T-cell (primary cell): ENCODE measurements at regions of chr5 and their contacts with region 1.

Region 1: GRCh38 chr5:175479125-175479881 is 943 bp downstream of the SFXN1 start:
- DNase-seq: peak in 2 of 35 experiments; percentile 0 to 16
- ATAC-seq: peak in 3 of 4 experiments; percentile 4 to 27 (median 16)
- H3K4me3 ChIP-seq: peak overlapping the region; percentile 65 to 85
- H3K4me3 Mint-ChIP-seq: peak overlapping the region; percentile 93 to 96 (median 96)
- H3K27ac ChIP-seq: peak overlapping the region; percentile 42
- H3K27ac Mint-ChIP-seq: peak overlapping the region; percentile 93 to 94
- H3K4me1 ChIP-seq: peaks cover 10 to 44% of the 10 kb centered on the region in 2 experiments
- H3K4me1 Mint-ChIP-seq: peaks cover 56 to 59% (median 57%) of the 10 kb centered on the region in 3 donors
- H3K27me3 ChIP-seq: peaks cover 0 to 4% of the 10 kb centered on the region in 2 experiments
- H3K27me3 Mint-ChIP-seq: no peaks in the 10 kb centered on the region

Region 2: GRCh38 chr5:175464074-175464941 is 15.0 kb before region 1 on chr5:
- CTCF ChIA-PET with region 1: interaction called, 6 to 12 read pairs
- POLR2A ChIA-PET with region 1: no interaction called
- DNase-seq: peak in 32 of 35 experiments; percentile 32 to 76 (median 56)
- ATAC-seq: peak; percentile 97 to 99 (median 98)
- H3K4me3 ChIP-seq: no peak overlapping the region
- H3K4me3 Mint-ChIP-seq: peak overlapping the region in 1 of 3 donors; percentile 4
- H3K27ac ChIP-seq: no peak overlapping the region
- H3K27ac Mint-ChIP-seq: peak overlapping the region; percentile 45 to 85
- H3K4me1 ChIP-seq: peaks cover 0 to 7% of the 10 kb centered on the region in 2 experiments
- H3K4me1 Mint-ChIP-seq: peaks cover 8 to 11% (median 9%) of the 10 kb centered on the region in 3 donors
- H3K27me3 ChIP-seq: no peaks in the 10 kb centered on the region
- H3K27me3 Mint-ChIP-seq: peaks cover 0 to 6% of the 10 kb centered on the region in 2 donors

Region 3: GRCh38 chr5:175501759-175502339 is 22.5 kb after region 1 on chr5:
- CTCF ChIA-PET with region 1: no interaction called
- POLR2A ChIA-PET with region 1: no interaction called
- DNase-seq: no peak
- ATAC-seq: no peak
- H3K4me3 ChIP-seq: no peak overlapping the region
- H3K4me3 Mint-ChIP-seq: no peak overlapping the region
- H3K27ac ChIP-seq: no peak overlapping the region
- H3K27ac Mint-ChIP-seq: peak overlapping the region; percentile 17 to 67
- H3K4me1 ChIP-seq: peaks cover 0 to 2% of the 10 kb centered on the region in 2 experiments
- H3K4me1 Mint-ChIP-seq: peaks cover 11 to 36% (median 29%) of the 10 kb centered on the region in 3 donors
- H3K27me3 ChIP-seq: no peaks in the 10 kb centered on the region
- H3K27me3 Mint-ChIP-seq: no peaks in the 10 kb centered on the region

Region 4: GRCh38 chr5:176373100-176373818 is 894.0 kb after region 1 on chr5:
- CTCF ChIA-PET with region 1: no interaction called
- POLR2A ChIA-PET with region 1: no interaction called
- DNase-seq: no peak
- ATAC-seq: no peak
- H3K4me3 ChIP-seq: no peak overlapping the region
- H3K4me3 Mint-ChIP-seq: no peak overlapping the region
- H3K27ac ChIP-seq: no peak overlapping the region
- H3K27ac Mint-ChIP-seq: no peak overlapping the region
- H3K4me1 ChIP-seq: no peaks in the 10 kb centered on the region
- H3K4me1 Mint-ChIP-seq: no peaks in the 10 kb centered on the region
- H3K27me3 ChIP-seq: no peaks in the 10 kb centered on the region
- H3K27me3 Mint-ChIP-seq: no peaks in the 10 kb centered on the region